Transverse colon (tissue), 4 donors: ENCODE measurements at regions of chr2 and their contacts with region 1.

Region 1: GRCh38 chr2:64062829-64063228 is 43.6 kb upstream of the VPS54 start:
- DNase-seq: no peak
- H3K4me3 ChIP-seq: no peak overlapping the region
- H3K27ac ChIP-seq: peak overlapping the region in 2 of 4 donors; percentile 47 to 52
- H3K4me1 ChIP-seq: peaks cover 3 to 23% (median 16%) of the 10 kb centered on the region in 4 donors
- H3K27me3 ChIP-seq: no peaks in the 10 kb centered on the region
- CTCF ChIP-seq: no peak
- EP300 ChIP-seq: no peak
- POLR2A ChIP-seq: no peak

Region 2: DNA sequence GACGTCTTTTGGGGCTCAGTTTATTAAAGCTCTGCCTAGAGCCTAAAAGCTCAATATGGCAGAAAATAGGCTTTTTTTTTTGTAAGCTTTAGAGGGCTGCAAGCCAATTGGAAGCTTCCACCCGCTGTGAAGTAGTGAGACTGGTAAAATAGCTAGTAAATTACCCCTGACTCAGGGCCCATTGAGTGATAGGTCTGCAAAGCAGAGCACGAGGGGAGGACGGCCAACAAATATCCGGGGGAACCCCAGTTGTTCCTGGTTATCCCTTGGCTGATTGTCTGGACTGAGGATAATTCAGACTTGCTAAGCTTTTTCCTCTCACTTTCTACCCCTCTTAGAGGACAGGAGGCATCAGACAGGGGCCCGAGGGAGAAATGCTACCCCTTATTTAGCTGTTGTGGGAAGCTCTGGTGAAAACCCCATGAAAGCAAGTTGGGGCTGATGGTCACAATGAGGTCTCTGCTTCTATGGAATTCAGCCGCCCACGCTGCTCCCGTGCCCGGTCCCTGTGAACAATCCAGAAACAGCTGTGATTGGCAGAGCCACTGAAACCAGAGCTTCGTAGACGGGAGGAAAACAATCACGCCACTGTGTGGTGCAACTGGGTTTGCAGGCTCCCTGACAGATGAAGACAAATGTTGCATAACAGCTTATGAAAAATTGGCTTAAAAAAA is 249.3 kb after region 1 on chr2:
- in situ Hi-C with region 1: loop called in 1 of 4 experiments (anchors 25 kb)
- intact Hi-C with region 1: no loop called
- DNase-seq: peak; percentile 78
- H3K4me3 ChIP-seq: peak overlapping the region in 1 of 4 donors; percentile 14
- H3K27ac ChIP-seq: peak overlapping the region; percentile 5 to 60 (median 40)
- H3K4me1 ChIP-seq: peaks cover 0 to 15% (median 7%) of the 10 kb centered on the region in 4 donors
- H3K27me3 ChIP-seq: no peaks in the 10 kb centered on the region
- CTCF ChIP-seq: peak; percentile 41 to 75 (median 57)
- EP300 ChIP-seq: no peak
- POLR2A ChIP-seq: no peak

Region 3: DNA sequence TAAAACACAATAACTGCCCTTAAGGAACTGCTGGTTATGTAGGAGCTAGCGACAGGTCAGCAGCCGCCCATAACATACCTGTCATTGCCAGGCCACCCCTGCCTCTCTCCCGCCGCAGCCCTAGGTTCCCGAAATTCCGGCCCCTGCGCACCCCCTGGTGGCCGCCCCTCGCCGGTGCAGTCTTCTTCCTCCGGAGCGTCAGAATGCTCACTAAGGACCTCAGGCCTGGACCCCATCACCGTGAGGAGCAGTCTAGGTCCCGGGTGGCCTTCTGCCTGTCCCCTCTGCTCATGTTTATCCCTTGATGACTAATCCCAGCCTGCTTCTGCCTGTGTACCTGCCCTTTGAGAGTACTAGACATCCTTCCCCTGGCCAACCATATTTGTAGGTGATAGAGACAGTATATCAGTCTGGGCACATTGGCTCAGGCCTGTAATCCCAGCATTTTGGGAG is 810.7 kb after region 1 on chr2:
- in situ Hi-C with region 1: loop called in 2 of 4 experiments (anchors 25 kb)
- intact Hi-C with region 1: no loop called
- DNase-seq: peak; percentile 84
- H3K4me3 ChIP-seq: peak overlapping the region in 1 of 4 donors; percentile 20
- H3K27ac ChIP-seq: no peak overlapping the region
- H3K4me1 ChIP-seq: peaks cover 0 to 15% (median 6%) of the 10 kb centered on the region in 4 donors
- H3K27me3 ChIP-seq: no peaks in the 10 kb centered on the region
- CTCF ChIP-seq: peak; percentile 92 to 97 (median 95)
- EP300 ChIP-seq: no peak
- POLR2A ChIP-seq: no peak